ENCODE measurements at regions of chr3 and their contacts with region 1.

Region 1: GRCh38 chr3:20340324-20340928 is 154.4 kb upstream of the SGO1 start:
- DNase-seq: peak; percentile 75
- H3K4me3 Mint-ChIP-seq: no peak overlapping the region
- H3K27ac Mint-ChIP-seq: no peak overlapping the region
- H3K4me1 Mint-ChIP-seq: no peaks in the 10 kb centered on the region
- H3K27me3 Mint-ChIP-seq: no peaks in the 10 kb centered on the region
- CTCF ChIP-seq: peak; percentile 63

Region 2: GRCh38 chr3:20160230-20160629 is 180.2 kb before region 1 on chr3:
- CTCF ChIA-PET with region 1: no interaction called
- intact Hi-C with region 1: no loop called
- DNase-seq: no peak
- H3K4me3 Mint-ChIP-seq: no peak overlapping the region
- H3K27ac Mint-ChIP-seq: no peak overlapping the region
- H3K4me1 Mint-ChIP-seq: no peaks in the 10 kb centered on the region
- H3K27me3 Mint-ChIP-seq: no peaks in the 10 kb centered on the region
- CTCF ChIP-seq: no peak

Region 3: DNA sequence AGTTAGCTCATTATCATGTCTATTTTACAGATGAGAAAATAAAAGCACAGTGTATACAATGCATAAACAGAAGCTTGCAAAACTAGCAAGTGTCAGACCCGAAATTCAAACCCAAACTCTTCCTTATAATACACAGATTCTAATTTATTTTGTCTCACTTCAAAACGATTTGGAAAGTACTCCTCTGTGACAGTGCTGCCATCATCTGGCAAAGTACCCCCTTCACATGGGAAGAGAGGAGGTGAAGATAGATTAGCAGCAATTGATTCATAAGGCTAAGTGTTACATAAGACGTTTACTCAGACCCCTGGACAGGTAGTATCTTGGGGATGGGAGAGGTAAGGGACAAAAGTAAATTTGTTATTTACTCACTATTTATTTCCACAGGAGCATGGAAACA is 589.6 kb after region 1 on chr3:
- CTCF ChIA-PET with region 1: no interaction called
- intact Hi-C with region 1: loop called (anchors 1 kb)
- DNase-seq: peak; percentile 45
- H3K4me3 Mint-ChIP-seq: no peak overlapping the region
- H3K27ac Mint-ChIP-seq: no peak overlapping the region
- H3K4me1 Mint-ChIP-seq: peaks cover 19% of the 10 kb centered on the region
- H3K27me3 Mint-ChIP-seq: no peaks in the 10 kb centered on the region
- CTCF ChIP-seq: peak; percentile 27

Region 4: GRCh38 chr3:21551019-21551418 is 1210.6 kb after region 1 on chr3:
- CTCF ChIA-PET with region 1: no interaction called
- intact Hi-C with region 1: loop called (anchors 1 kb)
- DNase-seq: peak; percentile 14
- H3K4me3 Mint-ChIP-seq: no peak overlapping the region
- H3K27ac Mint-ChIP-seq: no peak overlapping the region
- H3K4me1 Mint-ChIP-seq: no peaks in the 10 kb centered on the region
- H3K27me3 Mint-ChIP-seq: no peaks in the 10 kb centered on the region
- CTCF ChIP-seq: no peak

Measured in Calu3 (cell line).